WTC11 (cell line): ENCODE measurements at regions of chr1 and their contacts with region 1.

Region 1: GRCh38 chr1:1173793-1174415 is at the start of gene TTLL10:
- DNase-seq: peak; percentile 82
- ATAC-seq: peak; percentile 72
- H3K4me3 Mint-ChIP-seq: peak within 1 kb of the TSS; percentile 40; the same call in 1 of the 2 replicates
- H3K27ac Mint-ChIP-seq: no peak within 1 kb of the TSS
- H3K4me1 Mint-ChIP-seq: peaks cover 20% of the 10 kb centered on the region
- H3K27me3 Mint-ChIP-seq: peaks cover 19% of the 10 kb centered on the region
- CTCF ChIP-seq: no peak
- total RNA-seq, gene TTLL10: 0.78 to 1.1 TPM (median 1.1 TPM) in 3 replicates

Region 2: GRCh38 chr1:1206376-1207260 is 32.7 kb after region 1 on chr1 and contains the start of gene TNFRSF18:
- CTCF ChIA-PET with region 1: interaction called, 13 read pairs
- POLR2A ChIA-PET with region 1: interaction called, 3 read pairs
- DNase-seq: peak; percentile 57
- ATAC-seq: peak; percentile 56
- H3K4me3 Mint-ChIP-seq: peak within 1 kb of the TSS; percentile 40
- H3K27ac Mint-ChIP-seq: no peak within 1 kb of the TSS
- H3K4me1 Mint-ChIP-seq: no peaks in the 10 kb centered on the region
- H3K27me3 Mint-ChIP-seq: peaks cover 4% of the 10 kb centered on the region
- CTCF ChIP-seq: no peak
- total RNA-seq, gene TNFRSF18: 0.83 to 1.2 TPM (median 1.1 TPM) in 3 replicates